Left lung (tissue), 14 donors: ENCODE measurements at regions of chr22 and their contacts with region 1.

Region 1: DNA sequence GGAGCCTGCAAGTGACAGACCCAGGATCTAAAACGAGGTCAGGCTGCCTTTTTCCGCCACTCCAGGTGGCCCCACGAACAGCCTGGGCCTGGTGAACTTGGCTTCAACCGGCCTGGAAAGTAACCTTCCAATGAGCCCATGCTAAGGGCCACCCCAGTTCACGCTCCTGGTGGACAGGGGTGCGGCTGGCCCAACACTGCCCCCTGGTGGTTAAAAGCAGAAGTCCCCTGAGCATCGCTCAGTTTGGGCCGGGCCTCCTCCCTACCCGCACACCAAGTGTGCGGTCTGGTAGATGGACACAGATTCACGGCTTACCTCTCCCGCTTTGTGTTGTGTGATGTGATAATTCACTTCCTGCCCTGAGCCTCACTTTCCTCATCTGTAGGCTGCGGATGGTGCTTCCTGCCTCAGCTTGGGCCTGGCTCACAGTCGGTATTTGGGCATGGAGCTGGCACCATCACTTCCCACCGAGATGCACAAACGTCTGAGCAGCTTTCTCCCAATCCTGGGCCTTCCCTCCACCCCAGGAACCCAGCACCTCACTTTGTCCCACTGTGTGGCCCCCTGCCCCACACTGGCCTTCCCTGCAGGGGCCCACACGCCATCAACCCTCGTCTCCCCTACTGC is 13.7 kb upstream of the SEC14L3 start:
- DNase-seq: peak; percentile 24 to 88 (median 64)
- ATAC-seq: peak; percentile 97
- H3K4me3 ChIP-seq: no peak overlapping the region
- H3K27ac ChIP-seq: no peak overlapping the region
- H3K4me1 ChIP-seq: no peaks in the 10 kb centered on the region
- H3K27me3 ChIP-seq: peaks cover 0 to 10% of the 10 kb centered on the region in 2 donors
- CTCF ChIP-seq: peak; percentile 98 to 99

Region 2: DNA sequence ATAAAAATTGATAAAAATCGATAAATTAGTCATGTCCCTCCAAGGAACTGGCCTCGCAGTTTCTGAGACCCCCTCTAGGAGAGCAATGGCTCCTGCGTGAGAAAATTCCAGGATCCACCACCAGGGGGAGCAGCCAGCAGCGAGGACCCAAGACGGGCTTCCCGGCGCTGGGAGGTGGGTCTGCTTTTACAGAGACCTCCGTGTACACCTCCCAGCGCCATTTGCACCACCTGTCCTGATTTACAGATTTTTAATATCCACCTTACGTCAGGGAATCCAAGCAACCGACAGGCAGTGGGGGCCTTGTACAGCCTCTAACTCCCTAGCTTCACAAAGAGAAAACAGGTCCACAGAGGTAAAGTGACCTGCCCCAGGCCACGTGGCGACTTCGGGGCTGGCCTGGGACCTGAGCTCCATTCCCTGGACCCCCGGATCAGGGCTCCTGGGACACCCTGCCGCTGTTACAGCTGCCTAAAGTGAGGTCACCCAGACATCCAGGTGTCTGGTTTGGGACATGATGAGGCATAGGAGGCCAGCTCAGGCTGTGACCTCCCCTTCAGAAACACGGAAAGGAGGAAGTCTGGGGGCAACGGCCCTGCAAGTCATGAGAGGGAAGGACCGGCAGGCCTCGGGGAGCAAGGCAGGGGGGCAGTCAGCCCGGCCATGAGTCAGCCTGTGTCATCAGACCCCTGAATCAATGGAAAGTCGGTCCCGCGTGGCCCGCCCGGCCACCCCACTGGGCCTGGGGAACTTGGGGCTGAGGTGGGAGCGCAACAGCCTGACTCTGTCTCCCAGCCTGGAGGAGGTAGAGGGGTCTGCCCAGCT is 222.3 kb before region 1 on chr22:
- intact Hi-C with region 1: loop called in 1 of 2 experiments (anchors 10 kb)
- DNase-seq: peak in 3 of 4 donors; percentile 77 to 91 (median 83)
- ATAC-seq: peak; percentile 54
- H3K4me3 ChIP-seq: peak overlapping the region in 1 of 2 donors; percentile 28
- H3K27ac ChIP-seq: peak overlapping the region in 1 of 2 donors; percentile 76
- H3K4me1 ChIP-seq: peaks cover 0 to 60% of the 10 kb centered on the region in 2 donors
- H3K27me3 ChIP-seq: no peaks in the 10 kb centered on the region
- CTCF ChIP-seq: peak; percentile 90 to 99

Region 3: DNA sequence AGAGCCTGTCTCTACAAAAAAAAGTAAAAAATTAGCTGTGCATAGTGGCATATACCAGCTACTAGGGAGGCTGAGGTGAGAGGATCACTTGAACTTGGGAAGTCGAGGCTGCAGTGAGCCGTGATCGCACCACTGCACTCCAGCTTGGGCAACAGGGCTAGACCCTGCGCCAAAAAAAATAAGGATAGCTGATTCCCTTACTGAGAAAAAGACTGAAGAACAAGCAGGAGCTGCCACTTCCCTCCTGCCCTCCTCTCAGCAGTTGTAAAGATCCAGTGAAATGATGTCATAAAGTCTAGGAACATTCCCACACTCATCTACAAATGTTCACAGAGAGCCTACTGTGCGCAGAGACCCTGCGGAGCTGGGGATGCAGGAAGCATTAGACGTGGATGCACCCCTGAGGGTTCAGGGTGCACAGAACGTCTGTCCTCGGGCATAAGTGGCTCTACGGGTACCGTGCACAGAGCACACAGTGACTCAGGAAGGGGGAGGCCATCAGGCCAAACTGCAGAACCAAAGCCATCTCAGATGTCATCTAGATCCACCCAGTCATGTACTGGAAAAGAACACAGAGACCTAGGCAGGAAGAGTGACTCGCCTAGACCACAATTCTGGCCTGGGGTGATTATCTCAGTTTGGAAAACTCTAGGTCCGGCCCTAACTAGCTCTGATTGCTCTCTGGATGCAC is 76.9 kb before region 1 on chr22:
- intact Hi-C with region 1: no loop called
- DNase-seq: no peak
- ATAC-seq: peak; percentile 47
- H3K4me3 ChIP-seq: no peak overlapping the region
- H3K27ac ChIP-seq: no peak overlapping the region
- H3K4me1 ChIP-seq: no peaks in the 10 kb centered on the region
- H3K27me3 ChIP-seq: no peaks in the 10 kb centered on the region
- CTCF ChIP-seq: no peak

Region 4: DNA sequence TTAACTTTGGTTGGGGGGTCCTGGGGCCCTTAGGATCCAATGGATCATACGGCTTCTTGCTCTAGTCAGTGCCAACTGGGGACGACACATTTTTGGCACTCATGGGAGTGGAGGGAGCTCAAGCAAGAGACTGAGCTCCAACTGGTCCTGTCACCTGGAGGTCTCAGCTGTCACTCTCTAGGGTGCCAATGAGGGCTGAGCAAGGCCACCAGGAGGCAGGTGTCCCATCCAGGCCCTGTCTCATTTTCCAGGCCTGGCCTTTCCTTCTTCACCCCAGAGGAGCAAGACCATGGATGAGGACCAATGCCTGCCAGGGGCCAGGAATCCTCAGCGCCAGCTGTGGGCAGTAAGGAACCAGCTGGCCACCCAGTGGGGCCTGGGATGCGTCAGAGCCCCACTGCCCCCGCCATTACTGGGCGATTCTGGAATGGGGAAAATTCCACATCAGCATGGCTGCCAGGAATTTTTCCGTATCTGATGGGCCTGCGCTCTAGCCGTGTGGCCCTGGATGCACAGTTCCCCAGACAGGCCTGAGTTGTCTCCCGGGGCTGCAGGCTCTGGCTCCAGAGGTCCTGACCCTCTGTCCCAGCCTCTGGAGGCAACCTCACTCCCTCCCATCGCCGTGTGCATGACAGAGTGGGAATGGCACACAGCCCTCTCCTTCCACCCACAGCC is 89.7 kb after region 1 on chr22:
- intact Hi-C with region 1: no loop called
- DNase-seq: no peak
- ATAC-seq: no peak
- H3K4me3 ChIP-seq: no peak overlapping the region
- H3K27ac ChIP-seq: no peak overlapping the region
- H3K4me1 ChIP-seq: peaks cover 0 to 21% of the 10 kb centered on the region in 2 donors
- H3K27me3 ChIP-seq: peaks cover 0 to 16% of the 10 kb centered on the region in 2 donors
- CTCF ChIP-seq: no peak